Colonic mucosa (tissue), 4 donors: ENCODE measurements at regions of chr12 and their contacts with region 1.

Region 1: GRCh38 chr12:79690638-79691493 is at the start of gene PAWR:
- DNase-seq: peak; percentile 81
- H3K4me3 ChIP-seq: peak within 1 kb of the TSS; percentile 80
- H3K27ac ChIP-seq: peak within 1 kb of the TSS; percentile 95
- H3K4me1 ChIP-seq: no peaks in the 10 kb centered on the region
- H3K27me3 ChIP-seq: no peaks in the 10 kb centered on the region
- CTCF ChIP-seq: no peak
- total RNA-seq, gene PAWR: 135 to 211 TPM

Region 2: GRCh38 chr12:79555028-79555930 is 135.6 kb before region 1 on chr12:
- intact Hi-C with region 1: loop called (anchors 5 kb)
- DNase-seq: no peak
- H3K4me3 ChIP-seq: no peak overlapping the region
- H3K27ac ChIP-seq: no peak overlapping the region
- H3K4me1 ChIP-seq: no peaks in the 10 kb centered on the region
- H3K27me3 ChIP-seq: no peaks in the 10 kb centered on the region
- CTCF ChIP-seq: peak; percentile 38

Region 3: DNA sequence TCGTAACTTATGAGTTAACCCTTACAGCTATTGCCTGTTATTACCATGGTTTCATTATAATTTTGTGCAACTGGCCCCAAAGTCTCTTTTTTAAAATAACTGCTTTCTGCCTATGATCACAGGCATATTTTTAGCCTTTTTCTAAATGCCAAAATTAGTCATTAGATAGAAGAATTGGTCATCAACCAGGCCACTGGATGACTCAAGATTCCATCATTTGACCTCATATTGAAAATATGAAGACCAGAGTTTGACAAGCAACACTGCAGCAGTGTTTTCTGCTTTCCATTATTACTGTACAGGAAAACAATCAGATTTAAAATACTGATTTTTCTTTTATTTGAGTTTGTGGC is 353.8 kb after region 1 on chr12:
- intact Hi-C with region 1: no loop called
- DNase-seq: no peak
- H3K4me3 ChIP-seq: no peak overlapping the region
- H3K27ac ChIP-seq: no peak overlapping the region
- H3K4me1 ChIP-seq: no peaks in the 10 kb centered on the region
- H3K27me3 ChIP-seq: no peaks in the 10 kb centered on the region
- CTCF ChIP-seq: no peak

Region 4: DNA sequence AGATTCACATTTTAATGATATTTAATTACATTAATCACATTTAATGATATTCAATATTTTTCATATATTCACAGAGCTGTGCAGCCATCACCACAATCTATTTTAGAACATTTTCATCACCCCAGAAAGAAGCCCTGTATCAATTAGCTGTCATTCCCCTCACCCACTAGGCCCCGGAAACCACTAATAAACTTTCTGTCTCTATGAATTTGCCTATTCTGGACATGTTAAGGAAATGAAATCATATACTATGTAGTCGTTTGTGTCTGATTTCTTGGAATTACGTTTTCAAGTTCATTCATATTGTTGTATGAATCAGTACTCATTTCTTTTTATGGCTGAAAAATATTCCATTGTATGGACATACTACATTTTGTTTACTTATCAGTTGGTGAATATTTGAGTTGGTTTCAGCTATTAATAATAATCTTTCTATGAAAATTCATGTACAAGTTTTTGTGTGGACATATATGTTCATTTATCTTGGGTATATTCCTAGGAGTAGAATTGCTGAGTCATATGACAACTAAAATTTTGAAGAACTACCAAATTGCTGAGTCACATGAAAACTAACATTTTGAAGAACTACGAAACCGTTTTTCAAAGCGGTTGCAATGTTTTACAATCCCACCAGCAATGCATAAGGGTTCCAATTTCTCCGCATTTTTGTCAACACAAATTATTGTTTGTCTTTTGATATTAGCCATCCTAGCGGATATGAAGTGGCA is 396.8 kb after region 1 on chr12:
- intact Hi-C with region 1: no loop called
- DNase-seq: no peak
- H3K4me3 ChIP-seq: no peak overlapping the region
- H3K27ac ChIP-seq: no peak overlapping the region
- H3K4me1 ChIP-seq: no peaks in the 10 kb centered on the region
- H3K27me3 ChIP-seq: no peaks in the 10 kb centered on the region
- CTCF ChIP-seq: no peak